IMR-90 (cell line): ENCODE measurements at regions of chr4 and their contacts with region 1.

Region 1: DNA sequence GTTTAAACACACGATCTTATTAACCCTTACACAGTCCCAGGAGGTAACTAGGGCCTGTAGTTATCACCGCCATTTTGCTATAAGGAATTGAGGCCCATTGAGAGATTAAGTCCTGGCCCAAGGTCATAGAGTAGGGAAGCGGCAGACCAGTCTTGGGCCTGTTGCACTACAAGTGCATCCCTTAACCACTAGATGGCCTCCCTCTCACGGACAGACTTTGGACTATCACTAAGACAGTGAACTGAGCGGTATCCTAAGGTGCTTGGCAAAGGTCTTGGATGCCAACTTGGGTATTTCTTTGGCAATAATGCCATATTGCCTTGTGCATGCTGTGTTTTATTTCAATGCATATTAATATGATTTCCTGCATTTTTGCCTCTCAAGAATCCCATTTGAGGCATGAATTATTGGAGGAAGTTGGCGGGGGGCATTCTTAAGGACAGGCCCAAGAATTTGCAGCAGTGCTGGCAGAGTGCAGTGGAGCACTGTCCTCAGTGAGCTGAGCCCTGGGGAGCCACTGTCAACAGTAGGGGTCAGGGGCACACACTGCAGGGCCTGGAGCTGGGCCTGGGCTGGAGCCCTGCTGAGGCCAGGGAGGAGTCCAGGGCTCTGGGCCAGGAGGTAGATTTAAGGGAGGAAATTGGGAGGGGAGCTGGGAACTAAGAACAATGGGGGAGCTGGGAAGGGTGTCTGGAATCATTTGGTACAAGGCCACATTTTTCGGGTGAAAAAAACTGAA is 147.4 kb downstream of the SMIM20 start:
- DNase-seq: peak; percentile 60
- ATAC-seq: peak; percentile 71
- H3K4me3 ChIP-seq: no peak overlapping the region
- H3K27ac ChIP-seq: no peak overlapping the region
- H3K4me1 ChIP-seq: peaks cover 9% of the 10 kb centered on the region
- H3K27me3 ChIP-seq: no peaks in the 10 kb centered on the region
- CTCF ChIP-seq: peak; percentile 57
- POLR2A ChIP-seq: no peak
- RAD21 ChIP-seq: peak; percentile 67

Region 2: DNA sequence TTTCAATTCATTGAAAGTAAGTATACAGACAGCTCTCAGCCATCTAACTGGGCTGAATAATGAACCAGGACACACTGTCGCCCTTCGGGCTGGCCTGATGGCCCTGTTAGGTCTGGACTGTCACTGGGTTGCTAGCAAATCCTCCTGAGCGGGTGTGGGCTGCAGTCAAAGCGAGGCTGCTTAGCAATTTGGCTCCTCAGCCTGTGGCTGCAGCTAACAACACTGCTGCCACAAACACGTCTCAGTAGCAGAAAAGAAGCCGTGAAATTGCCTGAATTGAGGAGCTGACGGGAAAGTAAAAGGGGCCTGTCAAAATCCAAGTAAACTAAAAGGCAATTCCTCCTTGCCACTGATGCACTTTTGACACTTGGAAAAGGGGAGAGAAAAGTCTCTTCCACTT is 74.6 kb before region 1 on chr4:
- CTCF ChIA-PET with region 1: interaction called, 3 read pairs
- POLR2A ChIA-PET with region 1: no interaction called
- dilution Hi-C with region 1: no loop called
- in situ Hi-C with region 1: no loop called
- intact Hi-C with region 1: loop called (anchors 5 kb)
- DNase-seq: no peak
- ATAC-seq: no peak
- H3K4me3 ChIP-seq: no peak overlapping the region
- H3K27ac ChIP-seq: no peak overlapping the region
- H3K4me1 ChIP-seq: peaks cover 2% of the 10 kb centered on the region; the same call in 1 of the 2 replicates
- H3K27me3 ChIP-seq: peaks cover 5% of the 10 kb centered on the region
- CTCF ChIP-seq: no peak
- POLR2A ChIP-seq: no peak
- RAD21 ChIP-seq: no peak

Region 3: GRCh38 chr4:26126143-26126718 is 64.8 kb after region 1 on chr4:
- CTCF ChIA-PET with region 1: no interaction called
- POLR2A ChIA-PET with region 1: interaction called, 12 read pairs
- dilution Hi-C with region 1: no loop called
- in situ Hi-C with region 1: no loop called
- intact Hi-C with region 1: no loop called
- DNase-seq: no peak
- ATAC-seq: no peak
- H3K4me3 ChIP-seq: no peak overlapping the region
- H3K27ac ChIP-seq: no peak overlapping the region
- H3K4me1 ChIP-seq: no peaks in the 10 kb centered on the region
- H3K27me3 ChIP-seq: no peaks in the 10 kb centered on the region
- CTCF ChIP-seq: no peak
- POLR2A ChIP-seq: no peak
- RAD21 ChIP-seq: no peak